CD4-positive, alpha-beta memory T cell (primary cell): ENCODE measurements at regions of chr17 and their contacts with region 1.

Region 1: GRCh38 chr17:47698749-47699535 is 5.0 kb downstream of the TBKBP1 start:
- DNase-seq: peak; percentile 57 to 74 (median 69)
- H3K4me3 ChIP-seq: no peak overlapping the region
- H3K4me3 Mint-ChIP-seq: peak overlapping the region in 4 of 8 donors; percentile 7 to 77 (median 20)
- H3K27ac ChIP-seq: no peak overlapping the region
- H3K27ac Mint-ChIP-seq: peak overlapping the region in 5 of 7 donors; percentile 0 to 80 (median 66)
- H3K4me1 ChIP-seq: peaks cover 56% of the 10 kb centered on the region
- H3K4me1 Mint-ChIP-seq: peaks cover 26 to 70% (median 44%) of the 10 kb centered on the region in 4 donors
- H3K27me3 ChIP-seq: no peaks in the 10 kb centered on the region
- H3K27me3 Mint-ChIP-seq: no peaks in the 10 kb centered on the region

Region 2: DNA sequence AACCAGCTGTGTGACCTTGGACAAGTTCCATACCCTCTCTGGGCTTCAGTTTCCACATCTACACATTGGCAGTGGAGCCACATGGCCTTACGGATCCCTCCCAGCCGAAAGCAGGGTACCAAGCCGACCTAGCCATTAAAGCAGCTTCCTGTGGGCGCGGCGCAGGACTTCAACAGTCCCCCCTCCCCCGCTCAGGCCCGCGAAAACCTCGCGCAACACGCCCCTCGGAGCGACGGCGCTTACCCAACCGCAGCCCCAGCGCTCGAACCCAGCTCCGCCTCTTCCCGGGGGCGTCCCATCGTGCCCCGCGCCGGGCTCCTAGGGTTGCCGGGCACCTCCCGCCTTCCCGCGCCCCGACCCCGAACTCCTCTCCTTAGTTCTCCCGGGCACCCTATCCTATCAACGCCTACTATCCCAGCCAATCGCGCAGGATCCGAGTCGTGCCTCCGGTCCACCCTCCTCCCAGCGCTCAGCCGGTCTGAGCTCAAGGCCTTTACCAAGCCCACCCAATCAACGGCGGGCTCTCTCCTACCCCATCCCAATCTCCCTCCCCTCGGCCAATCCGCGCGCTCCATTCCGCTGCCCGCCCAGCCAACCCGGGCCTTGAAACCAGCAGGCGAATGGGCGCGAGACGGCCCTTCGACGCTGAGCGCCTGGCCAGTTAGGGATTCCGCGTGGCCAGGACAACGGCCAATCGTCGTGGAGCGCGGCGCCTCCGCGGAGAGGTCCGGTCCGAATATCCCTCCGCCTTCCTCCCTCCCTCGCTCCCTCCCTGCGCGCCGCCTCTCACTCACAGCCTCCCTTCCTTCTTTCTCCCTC is 49.6 kb before region 1 on chr17 and contains the start of gene KPNB1:
- CTCF ChIA-PET with region 1: interaction called, 3 read pairs
- POLR2A ChIA-PET with region 1: interaction called, 34 read pairs
- intact Hi-C with region 1: no loop called
- DNase-seq: peak; percentile 98 to 99 (median 98)
- H3K4me3 ChIP-seq: peak within 1 kb of the TSS; percentile 73 to 79
- H3K4me3 Mint-ChIP-seq: peak within 1 kb of the TSS; percentile 97 to 100 (median 100)
- H3K27ac ChIP-seq: peak within 1 kb of the TSS; percentile 82
- H3K27ac Mint-ChIP-seq: peak within 1 kb of the TSS; percentile 91 to 100 (median 99)
- H3K4me1 ChIP-seq: peaks cover 53% of the 10 kb centered on the region
- H3K4me1 Mint-ChIP-seq: peaks cover 37 to 68% (median 41%) of the 10 kb centered on the region in 4 donors
- H3K27me3 ChIP-seq: no peaks in the 10 kb centered on the region
- H3K27me3 Mint-ChIP-seq: no peaks in the 10 kb centered on the region
- total RNA-seq, gene KPNB1: 258 to 268 TPM

Region 3: GRCh38 chr17:47675380-47676198 is 23.4 kb before region 1 on chr17:
- CTCF ChIA-PET with region 1: interaction called, 27 read pairs
- POLR2A ChIA-PET with region 1: interaction called, 7 read pairs
- intact Hi-C with region 1: no loop called
- DNase-seq: no peak
- H3K4me3 ChIP-seq: no peak overlapping the region
- H3K4me3 Mint-ChIP-seq: no peak overlapping the region
- H3K27ac ChIP-seq: no peak overlapping the region
- H3K27ac Mint-ChIP-seq: peak overlapping the region in 6 of 7 donors; percentile 4 to 78 (median 68)
- H3K4me1 ChIP-seq: peaks cover 1% of the 10 kb centered on the region
- H3K4me1 Mint-ChIP-seq: peaks cover 0 to 15% (median 8%) of the 10 kb centered on the region in 4 donors
- H3K27me3 ChIP-seq: no peaks in the 10 kb centered on the region
- H3K27me3 Mint-ChIP-seq: no peaks in the 10 kb centered on the region

Region 4: GRCh38 chr17:47720754-47721533 is 22.0 kb after region 1 on chr17:
- CTCF ChIA-PET with region 1: interaction called, 118 read pairs
- POLR2A ChIA-PET with region 1: interaction called, 44 read pairs
- intact Hi-C with region 1: loop called (anchors 1 kb)
- DNase-seq: peak; percentile 44 to 94 (median 51)
- H3K4me3 ChIP-seq: peak overlapping the region in 1 of 2 donors; percentile 15
- H3K4me3 Mint-ChIP-seq: peak overlapping the region; percentile 35 to 82 (median 65)
- H3K27ac ChIP-seq: no peak overlapping the region
- H3K27ac Mint-ChIP-seq: peak overlapping the region in 4 of 7 donors; percentile 42 to 86 (median 74)
- H3K4me1 ChIP-seq: peaks cover 56% of the 10 kb centered on the region
- H3K4me1 Mint-ChIP-seq: peaks cover 41 to 74% (median 58%) of the 10 kb centered on the region in 4 donors
- H3K27me3 ChIP-seq: no peaks in the 10 kb centered on the region
- H3K27me3 Mint-ChIP-seq: no peaks in the 10 kb centered on the region

Region 5: GRCh38 chr17:47742319-47743181 is 43.6 kb after region 1 on chr17:
- CTCF ChIA-PET with region 1: interaction called, 92 read pairs
- POLR2A ChIA-PET with region 1: interaction called, 145 read pairs
- intact Hi-C with region 1: loop called (anchors 1 kb)
- DNase-seq: peak in 4 of 5 donors; percentile 39 to 48 (median 42)
- H3K4me3 ChIP-seq: no peak overlapping the region
- H3K4me3 Mint-ChIP-seq: peak overlapping the region in 5 of 8 donors; percentile 12 to 80 (median 61)
- H3K27ac ChIP-seq: no peak overlapping the region
- H3K27ac Mint-ChIP-seq: peak overlapping the region in 4 of 7 donors; percentile 17 to 81 (median 60)
- H3K4me1 ChIP-seq: peaks cover 35% of the 10 kb centered on the region
- H3K4me1 Mint-ChIP-seq: peaks cover 18 to 40% (median 28%) of the 10 kb centered on the region in 4 donors
- H3K27me3 ChIP-seq: no peaks in the 10 kb centered on the region
- H3K27me3 Mint-ChIP-seq: no peaks in the 10 kb centered on the region

Region 6: GRCh38 chr17:47802341-47803022 is 103.5 kb after region 1 on chr17:
- CTCF ChIA-PET with region 1: interaction called, 5 read pairs
- POLR2A ChIA-PET with region 1: no interaction called
- intact Hi-C with region 1: loop called (anchors 1 kb)
- DNase-seq: peak; percentile 52 to 62 (median 57)
- H3K4me3 ChIP-seq: no peak overlapping the region
- H3K4me3 Mint-ChIP-seq: no peak overlapping the region
- H3K27ac ChIP-seq: no peak overlapping the region
- H3K27ac Mint-ChIP-seq: peak overlapping the region in 2 of 7 donors; percentile 56 to 57
- H3K4me1 ChIP-seq: no peaks in the 10 kb centered on the region
- H3K4me1 Mint-ChIP-seq: no peaks in the 10 kb centered on the region
- H3K27me3 ChIP-seq: no peaks in the 10 kb centered on the region
- H3K27me3 Mint-ChIP-seq: peaks cover 1 to 3% of the 10 kb centered on the region in 2 donors

Region 7: DNA sequence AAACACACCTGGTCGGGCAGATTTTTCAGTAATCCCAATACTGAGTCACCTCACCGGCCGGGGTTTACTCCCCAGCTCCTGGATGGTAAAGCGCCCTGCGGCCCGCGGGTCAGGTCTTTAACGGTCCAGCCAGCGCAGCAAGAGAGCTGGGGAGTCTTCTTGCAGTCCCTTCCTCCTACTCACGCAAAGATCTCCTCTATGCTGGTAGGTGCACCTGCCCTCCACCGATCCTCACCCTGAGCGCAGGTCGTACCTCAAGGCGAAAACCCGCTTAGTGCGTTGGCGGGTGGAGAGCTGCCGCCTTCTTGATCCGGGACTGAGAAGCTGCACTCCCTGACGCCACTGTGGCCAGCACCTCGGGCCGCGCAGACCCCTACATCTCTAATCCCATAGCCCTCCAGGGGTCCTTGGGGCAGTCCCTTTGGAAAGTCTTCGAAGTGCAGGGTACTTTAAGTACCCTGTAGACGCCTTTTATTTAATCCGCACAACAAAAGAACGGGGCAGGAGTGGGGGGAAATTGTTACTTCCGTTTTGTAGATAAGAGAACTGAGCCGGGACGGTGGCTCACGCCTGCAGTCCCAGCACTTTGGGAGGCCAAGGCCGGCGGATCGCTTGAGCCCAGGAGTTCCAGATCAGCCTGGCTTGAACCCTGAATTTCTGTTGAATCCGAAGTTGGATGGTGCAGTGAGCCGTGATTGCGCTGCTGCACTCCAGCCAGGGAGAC is 1040.0 kb after region 1 on chr17:
- CTCF ChIA-PET with region 1: no interaction called
- POLR2A ChIA-PET with region 1: no interaction called
- intact Hi-C with region 1: no loop called
- DNase-seq: no peak
- H3K4me3 ChIP-seq: no peak overlapping the region
- H3K4me3 Mint-ChIP-seq: peak overlapping the region in 7 of 8 donors; percentile 53 to 73 (median 62)
- H3K27ac ChIP-seq: no peak overlapping the region
- H3K27ac Mint-ChIP-seq: peak overlapping the region in 1 of 7 donors; percentile 40
- H3K4me1 ChIP-seq: peaks cover 9% of the 10 kb centered on the region
- H3K4me1 Mint-ChIP-seq: peaks cover 5 to 15% (median 10%) of the 10 kb centered on the region in 4 donors
- H3K27me3 ChIP-seq: peaks cover 64% of the 10 kb centered on the region
- H3K27me3 Mint-ChIP-seq: peaks cover 70 to 82% of the 10 kb centered on the region in 2 donors